Dendritic cell treated with granulocyte-macrophage colony-stimulating factor and Interleukin-4, amounts not matched to agents 40 ng/mL and 50 ng/mL, for 4 days (primary cell): ENCODE measurements at regions of chr3 and their contacts with region 1.

Region 1: DNA sequence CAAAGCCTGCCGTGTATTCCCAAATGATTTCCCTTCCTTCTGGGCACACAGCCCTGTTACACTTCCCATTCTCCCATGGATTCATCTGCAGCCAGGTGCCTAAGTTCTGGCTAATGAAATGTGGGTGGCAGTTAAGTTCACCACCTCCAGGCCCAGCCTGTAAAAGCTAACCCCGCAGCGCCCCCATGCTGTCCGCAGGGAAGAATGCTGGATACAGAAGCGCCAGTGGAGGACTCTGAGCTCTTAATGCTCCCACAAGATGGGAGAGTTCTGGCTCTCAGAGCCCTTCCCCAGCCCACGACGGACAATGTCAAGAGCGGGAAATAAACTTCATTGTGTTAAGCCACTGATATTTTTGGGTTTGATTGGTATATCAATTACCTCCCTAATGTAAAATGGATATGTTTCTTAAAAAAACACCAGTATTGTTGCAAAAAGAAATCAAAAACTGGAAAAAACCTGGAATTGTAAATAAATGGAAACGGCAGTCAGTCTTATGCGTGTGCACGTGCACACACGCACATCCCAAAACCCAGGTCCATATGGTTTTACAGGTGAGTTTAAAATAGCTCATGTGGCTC is 37.7 kb upstream of the FGD5 start:
- H3K4me3 Mint-ChIP-seq: no peak overlapping the region
- H3K27ac Mint-ChIP-seq: no peak overlapping the region
- H3K4me1 Mint-ChIP-seq: no peaks in the 10 kb centered on the region
- H3K27me3 Mint-ChIP-seq: peaks cover 3% of the 10 kb centered on the region

Region 2: DNA sequence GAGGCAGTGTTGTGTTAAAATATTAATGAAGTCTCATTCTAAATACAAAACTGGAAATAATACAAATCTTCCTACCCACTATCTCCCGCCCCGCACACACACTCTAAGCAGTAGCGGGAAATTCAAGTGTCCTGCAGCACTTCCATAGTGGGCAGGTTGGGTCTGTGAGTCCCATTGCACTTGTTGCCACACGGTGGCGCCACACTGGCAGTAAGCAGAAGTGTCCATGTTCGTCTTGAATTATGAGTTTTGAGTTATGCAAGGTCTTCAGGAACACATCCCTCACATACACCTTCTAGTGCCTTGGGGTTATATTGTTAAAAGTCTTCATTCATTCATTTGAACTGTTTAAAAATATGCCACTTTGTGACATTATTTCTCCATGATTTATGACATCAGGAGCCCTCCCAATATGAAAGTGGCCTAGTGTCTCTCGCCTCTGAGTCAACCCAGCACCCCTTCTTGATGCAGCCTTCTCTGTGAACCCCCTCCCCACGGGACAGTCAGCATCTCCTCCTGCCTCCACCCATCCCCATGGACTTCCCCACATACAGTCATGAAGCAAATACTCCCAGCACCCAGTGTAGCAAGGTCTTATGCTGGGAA is 147.1 kb before region 1 on chr3:
- intact Hi-C with region 1: loop called (anchors 1 kb)
- H3K4me3 Mint-ChIP-seq: no peak overlapping the region
- H3K27ac Mint-ChIP-seq: no peak overlapping the region
- H3K4me1 Mint-ChIP-seq: no peaks in the 10 kb centered on the region
- H3K27me3 Mint-ChIP-seq: peaks cover 11% of the 10 kb centered on the region

Region 3: DNA sequence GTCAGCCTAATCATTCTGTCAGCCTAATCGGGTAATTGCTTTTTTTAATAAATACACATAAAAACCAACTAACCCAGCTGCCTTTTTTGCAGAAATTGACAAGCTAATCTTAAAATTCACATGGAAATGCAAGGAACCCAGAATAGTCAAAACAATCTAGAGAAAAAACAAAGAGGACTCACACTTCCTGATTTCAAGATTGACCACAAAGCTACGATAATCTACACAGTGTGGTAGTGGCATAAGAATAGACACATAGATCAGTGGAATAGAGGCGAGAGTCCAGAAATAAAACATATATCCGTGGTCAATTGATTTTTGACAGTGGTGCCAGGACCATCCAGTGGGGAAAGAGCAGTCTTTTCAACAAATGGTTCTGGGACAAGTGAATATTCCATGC is 108.4 kb before region 1 on chr3:
- intact Hi-C with region 1: loop called (anchors 2 kb)
- H3K4me3 Mint-ChIP-seq: no peak overlapping the region
- H3K27ac Mint-ChIP-seq: no peak overlapping the region
- H3K4me1 Mint-ChIP-seq: no peaks in the 10 kb centered on the region
- H3K27me3 Mint-ChIP-seq: no peaks in the 10 kb centered on the region